ENCODE measurements at regions of chr1 and their contacts with region 1.

Region 1: DNA sequence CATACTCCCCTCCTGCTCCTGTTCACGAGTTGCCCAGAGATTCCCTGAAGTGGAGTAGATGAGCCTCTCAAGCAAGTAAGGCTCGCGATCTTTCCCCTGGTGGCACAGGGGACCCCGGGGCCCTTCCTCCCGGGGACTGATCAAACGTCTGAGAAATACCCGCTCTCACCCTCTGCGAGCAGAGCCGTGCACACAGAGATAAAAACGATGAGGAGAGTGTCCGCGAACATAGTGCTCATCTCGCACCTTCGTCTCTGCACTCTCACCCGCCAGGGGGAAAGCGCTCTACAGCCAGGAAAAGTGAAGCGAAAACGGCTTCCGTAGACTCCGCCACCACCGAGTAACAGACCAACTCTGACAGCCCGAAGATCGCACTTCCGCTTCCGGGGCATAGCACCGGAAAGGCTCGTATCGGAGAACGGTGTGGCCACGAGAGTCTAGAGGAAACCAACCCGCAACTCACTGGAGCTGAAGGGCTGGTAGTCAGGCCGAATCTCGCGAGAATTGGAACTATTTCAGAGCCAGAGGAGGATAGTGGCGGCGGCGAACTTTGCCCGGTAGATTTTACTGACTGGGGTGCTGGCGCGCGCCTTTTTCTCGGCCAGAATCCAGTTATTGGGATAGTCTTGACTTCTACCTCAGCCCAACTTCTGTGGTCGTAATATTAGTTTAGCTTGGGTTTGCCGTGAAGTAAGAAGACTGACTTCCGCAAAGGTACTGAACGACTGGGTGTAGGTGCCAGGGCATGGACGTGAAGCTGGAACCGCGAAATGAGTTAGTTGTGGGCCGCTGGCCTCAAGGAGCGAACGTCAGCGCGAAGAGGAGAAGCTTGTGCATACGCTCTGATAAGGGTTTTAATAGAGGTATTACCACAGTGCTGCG is at the start of gene TMCO1:
- DNase-seq: peak; percentile 94 to 97 (median 96)
- ATAC-seq: peak; percentile 100
- H3K4me3 ChIP-seq: peak within 1 kb of the TSS; percentile 90
- H3K27ac ChIP-seq: peak within 1 kb of the TSS; percentile 60
- H3K4me1 ChIP-seq: peaks cover 6% of the 10 kb centered on the region
- H3K27me3 ChIP-seq: no peaks in the 10 kb centered on the region
- total RNA-seq, gene TMCO1: 45.7 to 62.7 (median 55.6) TPM

Region 2: GRCh38 chr1:165637427-165637826 is 131.3 kb before region 1 on chr1:
- intact Hi-C with region 1: loop called in 1 of 4 experiments (anchors 5 kb)
- DNase-seq: no peak
- ATAC-seq: peak; percentile 71 to 86
- H3K4me3 ChIP-seq: no peak overlapping the region
- H3K27ac ChIP-seq: peak overlapping the region; percentile 62
- H3K4me1 ChIP-seq: peaks cover 12% of the 10 kb centered on the region
- H3K27me3 ChIP-seq: no peaks in the 10 kb centered on the region

Region 3: GRCh38 chr1:165827268-165828102 is 58.7 kb after region 1 on chr1 and contains the start of gene UCK2:
- intact Hi-C with region 1: loop called in 1 of 4 experiments (anchors 10 kb)
- DNase-seq: peak; percentile 85 to 91 (median 90)
- ATAC-seq: peak; percentile 95 to 97
- H3K4me3 ChIP-seq: peak within 1 kb of the TSS; percentile 71
- H3K27ac ChIP-seq: peak within 1 kb of the TSS; percentile 79
- H3K4me1 ChIP-seq: no peaks in the 10 kb centered on the region
- H3K27me3 ChIP-seq: no peaks in the 10 kb centered on the region
- total RNA-seq, gene UCK2: 7.7 to 11.3 (median 9.9) TPM